ENCODE measurements at regions of chrX and their contacts with region 1.

Region 1: GRCh38 chrX:20442597-20442996 is 175.9 kb upstream of the RPS6KA3 start:
- DNase-seq: peak; percentile 92
- H3K4me3 Mint-ChIP-seq: no peak overlapping the region
- H3K27ac Mint-ChIP-seq: no peak overlapping the region
- H3K4me1 Mint-ChIP-seq: peaks cover 29% of the 10 kb centered on the region
- H3K27me3 Mint-ChIP-seq: peaks cover 2% of the 10 kb centered on the region

Region 2: GRCh38 chrX:20205927-20206708 is 236.5 kb before region 1 on chrX:
- intact Hi-C with region 1: no loop called
- DNase-seq: no peak
- H3K4me3 Mint-ChIP-seq: no peak overlapping the region
- H3K27ac Mint-ChIP-seq: peak overlapping the region; percentile 70
- H3K4me1 Mint-ChIP-seq: peaks cover 27% of the 10 kb centered on the region
- H3K27me3 Mint-ChIP-seq: no peaks in the 10 kb centered on the region

Region 3: GRCh38 chrX:20252381-20253231 is 190.0 kb before region 1 on chrX:
- intact Hi-C with region 1: loop called (anchors 1 kb)
- DNase-seq: peak; percentile 91
- H3K4me3 Mint-ChIP-seq: no peak overlapping the region
- H3K27ac Mint-ChIP-seq: peak overlapping the region; percentile 62
- H3K4me1 Mint-ChIP-seq: peaks cover 24% of the 10 kb centered on the region
- H3K27me3 Mint-ChIP-seq: no peaks in the 10 kb centered on the region

Region 4: DNA sequence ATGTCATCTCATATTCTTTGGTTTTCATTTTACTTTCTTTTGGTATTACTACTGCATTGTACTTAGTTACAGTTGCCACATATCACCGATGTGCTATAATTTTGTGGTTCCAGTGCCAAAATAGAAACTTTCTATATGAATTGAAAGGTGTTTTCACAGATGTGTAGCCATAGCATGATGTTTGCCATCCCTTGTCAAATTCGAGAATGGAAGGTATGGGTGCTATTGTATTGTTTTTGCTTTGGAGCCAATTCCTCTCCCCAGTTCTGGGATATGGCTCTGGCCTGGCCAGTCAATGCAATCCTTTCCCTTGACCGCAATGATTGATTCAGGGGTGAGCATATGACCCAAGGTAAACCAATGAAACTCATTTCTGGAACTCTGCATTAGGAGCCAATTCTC is 89.7 kb before region 1 on chrX:
- intact Hi-C with region 1: no loop called
- DNase-seq: no peak
- H3K4me3 Mint-ChIP-seq: no peak overlapping the region
- H3K27ac Mint-ChIP-seq: no peak overlapping the region
- H3K4me1 Mint-ChIP-seq: peaks cover 4% of the 10 kb centered on the region
- H3K27me3 Mint-ChIP-seq: no peaks in the 10 kb centered on the region

Region 5: GRCh38 chrX:20382518-20383297 is 59.9 kb before region 1 on chrX:
- intact Hi-C with region 1: loop called (anchors 2 kb)
- DNase-seq: peak; percentile 58
- H3K4me3 Mint-ChIP-seq: peak overlapping the region; percentile 5
- H3K27ac Mint-ChIP-seq: peak overlapping the region; percentile 70
- H3K4me1 Mint-ChIP-seq: peaks cover 16% of the 10 kb centered on the region
- H3K27me3 Mint-ChIP-seq: peaks cover 2% of the 10 kb centered on the region